HepG2 (cell line): ENCODE measurements at regions of chr4 and their contacts with region 1.

Region 1: GRCh38 chr4:102826890-102827673 is at the start of gene UBE2D3:
- DNase-seq: peak; percentile 81
- ATAC-seq: peak; percentile 64
- H3K4me3 ChIP-seq: peak within 1 kb of the TSS; percentile 92 to 97 (median 95)
- H3K27ac ChIP-seq: peak within 1 kb of the TSS; percentile 97
- H3K4me1 ChIP-seq: peaks cover 42% of the 10 kb centered on the region
- H3K27me3 ChIP-seq: peaks cover 0 to 2% of the 10 kb centered on the region in 2 experiments; a peak in 1 of 5 replicates
- CTCF ChIP-seq: peak; percentile 49
- EP300 ChIP-seq: no peak
- POLR2A ChIP-seq: peak; percentile 60 to 79; a peak in 2 of 4 replicates
- RAD21 ChIP-seq: peak; percentile 58
- total RNA-seq, gene UBE2D3: 224 and 265 TPM in 2 replicates

Region 2: DNA sequence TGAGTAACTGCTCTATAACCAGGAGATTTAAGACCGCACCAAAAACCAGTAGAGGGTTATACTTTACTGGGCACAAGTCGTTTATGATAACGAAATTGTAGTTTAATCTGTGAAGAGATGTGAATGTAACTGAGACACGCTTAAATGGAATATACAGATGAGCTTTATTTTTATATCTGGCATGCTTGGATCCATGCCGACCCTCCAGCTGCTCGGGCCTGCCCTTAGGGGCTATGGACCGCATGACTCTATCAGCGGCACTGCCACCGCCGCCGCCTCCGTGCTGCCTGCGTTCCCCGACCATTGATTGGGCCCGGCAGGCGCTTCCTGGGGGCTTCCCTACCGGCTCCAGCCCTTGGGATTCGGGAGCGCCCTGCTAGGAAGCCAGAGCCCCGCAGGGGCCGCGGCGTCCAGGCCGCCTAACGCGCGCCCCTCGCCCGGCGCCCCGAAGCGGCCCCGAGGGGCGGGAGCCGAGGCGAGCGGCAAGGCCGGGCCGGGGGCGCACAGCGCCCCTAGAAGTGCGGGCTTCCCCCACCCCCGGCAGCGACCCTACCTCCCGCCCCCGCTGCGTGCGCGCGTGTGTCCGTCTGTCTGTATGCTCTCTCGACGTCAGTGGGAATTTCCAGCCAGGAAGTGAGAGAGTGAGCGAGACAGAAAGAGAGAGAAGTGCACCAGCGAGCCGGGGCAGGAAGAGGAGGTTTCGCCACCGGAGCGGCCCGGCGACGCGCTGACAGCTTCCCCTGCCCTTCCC is 326.2 kb before region 1 on chr4 and contains the start of gene NFKB1:
- CTCF ChIA-PET with region 1: no interaction called
- POLR2A ChIA-PET with region 1: interaction called, 8 read pairs
- in situ Hi-C with region 1: no loop called
- intact Hi-C with region 1: loop called (anchors 5 kb)
- DNase-seq: peak; percentile 54
- ATAC-seq: peak; percentile 61
- H3K4me3 ChIP-seq: peak within 1 kb of the TSS; percentile 85 to 94 (median 92)
- H3K27ac ChIP-seq: peak within 1 kb of the TSS; percentile 97
- H3K4me1 ChIP-seq: peaks cover 43% of the 10 kb centered on the region
- H3K27me3 ChIP-seq: no peaks in the 10 kb centered on the region
- CTCF ChIP-seq: no peak
- EP300 ChIP-seq: no peak
- POLR2A ChIP-seq: peak in 1 of 2 experiments; percentile 11; a peak in 2 of 4 replicates
- RAD21 ChIP-seq: no peak
- total RNA-seq, gene NFKB1: 31.6 and 37.6 TPM in 2 replicates

Region 3: GRCh38 chr4:102760645-102761295 is 66.3 kb before region 1 on chr4 and contains the start of gene MANBA:
- CTCF ChIA-PET with region 1: no interaction called
- POLR2A ChIA-PET with region 1: interaction called, 19 read pairs
- in situ Hi-C with region 1: no loop called
- intact Hi-C with region 1: loop called (anchors 5 kb)
- DNase-seq: peak; percentile 63
- ATAC-seq: peak; percentile 95
- H3K4me3 ChIP-seq: peak within 1 kb of the TSS; percentile 84 to 95 (median 90)
- H3K27ac ChIP-seq: peak within 1 kb of the TSS; percentile 69
- H3K4me1 ChIP-seq: peaks cover 46% of the 10 kb centered on the region
- H3K27me3 ChIP-seq: no peaks in the 10 kb centered on the region; a peak in 1 of 5 replicates
- CTCF ChIP-seq: peak; percentile 27; the same call in 1 of the 2 replicates
- EP300 ChIP-seq: no peak
- POLR2A ChIP-seq: peak; percentile 70 to 85
- RAD21 ChIP-seq: peak; percentile 46; the same call in 1 of the 2 replicates
- total RNA-seq, gene MANBA: 17.1 and 33.3 TPM in 2 replicates

Region 4: GRCh38 chr4:102815981-102816380 is 11.1 kb before region 1 on chr4:
- CTCF ChIA-PET with region 1: no interaction called
- POLR2A ChIA-PET with region 1: interaction called, 62 read pairs
- in situ Hi-C with region 1: no loop called
- intact Hi-C with region 1: no loop called
- DNase-seq: peak; percentile 66
- ATAC-seq: no peak; the same call in 2 of the 3 replicates
- H3K4me3 ChIP-seq: no peak overlapping the region
- H3K27ac ChIP-seq: no peak overlapping the region
- H3K4me1 ChIP-seq: peaks cover 51% of the 10 kb centered on the region
- H3K27me3 ChIP-seq: no peaks in the 10 kb centered on the region
- CTCF ChIP-seq: no peak
- EP300 ChIP-seq: no peak
- POLR2A ChIP-seq: no peak
- RAD21 ChIP-seq: no peak

Region 5: GRCh38 chr4:102868781-102869568 is 41.9 kb after region 1 on chr4 and contains the start of gene CISD2:
- CTCF ChIA-PET with region 1: no interaction called
- POLR2A ChIA-PET with region 1: interaction called, 121 read pairs
- in situ Hi-C with region 1: loop called (anchors 5 kb)
- intact Hi-C with region 1: loop called (anchors 1 kb)
- DNase-seq: peak; percentile 78
- ATAC-seq: peak; percentile 97
- H3K4me3 ChIP-seq: peak within 1 kb of the TSS; percentile 58 to 76 (median 67)
- H3K27ac ChIP-seq: peak within 1 kb of the TSS; percentile 98
- H3K4me1 ChIP-seq: peaks cover 49% of the 10 kb centered on the region
- H3K27me3 ChIP-seq: no peaks in the 10 kb centered on the region
- CTCF ChIP-seq: no peak
- EP300 ChIP-seq: no peak
- POLR2A ChIP-seq: peak; percentile 93 to 95
- RAD21 ChIP-seq: no peak
- total RNA-seq, gene CISD2: 35.5 and 37.7 TPM in 2 replicates

Region 6: DNA sequence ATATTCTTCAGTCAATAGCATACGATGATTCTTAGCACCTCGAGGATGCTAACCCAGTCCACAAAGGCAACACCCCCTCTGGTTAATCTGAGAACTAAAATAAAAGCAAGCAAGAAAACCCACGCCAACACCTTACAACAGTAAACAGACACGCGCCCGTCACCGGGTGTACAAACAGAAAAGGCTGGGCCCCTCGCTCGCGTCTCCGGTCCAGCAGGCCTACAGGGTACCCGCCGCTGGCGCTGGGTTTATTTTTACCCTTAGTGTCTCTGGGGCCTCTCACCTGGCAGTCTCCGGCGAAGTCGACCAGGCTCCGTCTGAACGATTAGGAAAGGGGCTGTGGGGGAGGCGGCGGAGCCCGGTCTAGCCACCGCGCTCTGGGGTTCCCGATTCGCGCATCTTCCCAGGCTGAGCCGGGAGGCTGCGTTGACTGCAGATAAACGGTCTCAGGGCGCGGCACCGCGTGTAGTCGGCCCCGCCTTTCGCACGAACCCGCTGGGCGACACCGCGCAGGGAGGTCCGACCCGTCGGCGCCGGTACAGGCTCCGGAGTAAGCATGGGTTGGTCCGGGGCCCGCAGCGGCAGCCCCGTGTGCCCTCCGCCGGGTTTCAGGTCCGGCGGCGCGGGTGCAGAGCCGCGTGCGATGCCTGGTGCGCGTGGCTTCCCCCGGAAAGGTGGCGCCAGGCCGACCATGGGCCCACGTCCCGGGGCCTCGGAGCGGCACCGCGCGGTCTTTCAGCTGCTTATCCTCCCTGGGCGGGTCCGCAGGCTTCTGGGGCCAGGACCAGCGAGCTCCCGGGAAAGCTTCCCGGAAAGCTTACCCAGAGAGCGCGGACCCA is 249.0 kb after region 1 on chr4:
- CTCF ChIA-PET with region 1: no interaction called
- POLR2A ChIA-PET with region 1: interaction called, 23 read pairs
- in situ Hi-C with region 1: no loop called
- intact Hi-C with region 1: no loop called
- DNase-seq: peak; percentile 53
- ATAC-seq: peak; percentile 77
- H3K4me3 ChIP-seq: peak overlapping the region; percentile 81 to 90 (median 87)
- H3K27ac ChIP-seq: peak overlapping the region; percentile 90
- H3K4me1 ChIP-seq: peaks cover 42% of the 10 kb centered on the region
- H3K27me3 ChIP-seq: no peaks in the 10 kb centered on the region; a peak in 1 of 5 replicates
- CTCF ChIP-seq: no peak
- EP300 ChIP-seq: no peak
- POLR2A ChIP-seq: peak; percentile 62 to 72
- RAD21 ChIP-seq: peak; percentile 47